ENCODE measurements at regions of chr6 and their contacts with region 1.

Region 1: DNA sequence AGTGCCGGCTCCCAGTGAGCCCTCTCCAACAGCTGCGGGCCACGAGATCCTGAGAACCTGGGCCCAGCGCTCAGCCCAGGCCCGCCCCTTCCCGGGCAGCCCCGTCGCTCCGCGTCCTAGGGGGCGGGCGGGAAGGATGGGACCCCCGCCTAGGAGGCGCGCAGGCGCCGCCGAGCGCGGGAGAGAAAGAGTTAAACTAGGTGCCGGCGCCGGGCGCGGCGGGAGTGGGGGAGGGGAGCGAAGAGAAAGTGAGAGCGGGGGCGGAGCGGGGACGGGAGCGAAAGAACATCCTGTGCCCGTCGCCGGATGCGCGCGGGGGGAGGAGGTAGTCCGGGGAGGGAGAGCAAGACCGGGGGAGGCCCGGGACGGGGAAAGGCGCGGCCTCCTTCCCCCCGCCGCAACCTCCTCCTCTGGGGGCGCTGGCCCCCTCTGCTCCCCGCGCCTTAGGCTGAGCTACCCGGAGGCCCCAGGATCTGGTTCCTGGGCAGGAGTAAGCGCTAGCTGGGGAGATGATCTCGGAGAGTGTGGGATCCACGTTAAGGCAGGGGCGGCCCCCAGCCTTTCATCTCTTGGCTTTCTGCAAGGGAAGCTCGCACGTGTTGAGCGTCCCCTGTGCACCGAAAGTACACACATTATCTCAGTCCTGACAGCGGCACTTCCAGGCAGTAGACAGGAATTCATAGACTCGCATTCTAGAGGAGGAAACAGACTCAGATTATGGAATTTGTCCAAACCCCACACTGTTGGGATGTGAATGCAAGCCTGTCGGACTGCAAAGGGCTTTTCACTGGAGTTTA is 4.9 kb upstream of the ARMC12 start:
- DNase-seq: peak; percentile 98
- ATAC-seq: peak; percentile 63
- H3K4me3 Mint-ChIP-seq: peak overlapping the region; percentile 85
- H3K27ac Mint-ChIP-seq: peak overlapping the region; percentile 99
- H3K4me1 Mint-ChIP-seq: peaks cover 77% of the 10 kb centered on the region
- H3K27me3 Mint-ChIP-seq: no peaks in the 10 kb centered on the region

Region 2: DNA sequence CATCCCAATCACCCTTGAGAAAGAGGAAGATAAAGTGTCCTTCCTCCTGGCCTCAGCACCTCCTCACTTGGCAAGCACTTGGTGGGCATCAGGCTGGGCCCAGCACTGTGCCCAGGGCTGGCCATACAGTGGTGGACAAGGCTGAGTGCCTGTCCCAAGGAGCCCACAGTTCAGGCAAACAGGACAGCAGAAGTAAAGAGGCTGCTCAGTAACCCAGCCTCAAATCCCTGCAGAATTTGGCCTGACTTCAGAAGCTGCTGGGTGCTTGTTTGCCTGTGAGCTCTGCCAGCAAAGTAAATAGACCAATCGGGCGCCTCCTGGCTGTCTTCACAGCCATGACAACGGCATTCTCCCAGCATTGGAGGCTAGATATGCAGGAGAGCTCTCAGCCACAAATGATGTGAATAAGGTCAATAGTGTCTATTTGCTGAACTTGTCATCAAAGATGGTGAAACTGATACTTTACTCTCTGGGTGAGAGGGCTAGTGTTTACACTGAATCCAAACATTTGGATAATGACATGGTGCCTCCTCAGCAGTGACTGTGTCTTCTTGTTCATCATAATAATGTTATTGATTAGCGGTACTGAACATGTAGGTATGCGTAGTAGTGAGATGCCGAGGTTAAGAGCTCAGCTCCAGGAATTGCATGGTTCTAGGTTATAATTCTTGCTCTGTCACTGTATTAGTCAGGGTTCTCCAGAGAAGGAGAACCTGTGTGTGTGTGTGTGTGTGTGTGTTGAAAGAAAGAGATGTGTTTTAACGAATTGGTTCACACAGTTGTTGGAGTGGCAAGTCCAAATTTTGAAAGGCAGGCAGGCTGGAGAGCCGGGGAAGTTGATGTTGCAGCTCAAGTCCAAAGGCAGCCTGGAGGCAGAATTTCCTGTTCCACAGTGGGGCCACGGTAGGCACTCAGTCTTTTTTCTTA is 316.6 kb before region 1 on chr6:
- CTCF ChIA-PET with region 1: no interaction called
- POLR2A ChIA-PET with region 1: no interaction called
- DNase-seq: peak; percentile 34
- ATAC-seq: no peak
- H3K4me3 Mint-ChIP-seq: no peak overlapping the region
- H3K27ac Mint-ChIP-seq: peak overlapping the region; percentile 78
- H3K4me1 Mint-ChIP-seq: peaks cover 84% of the 10 kb centered on the region
- H3K27me3 Mint-ChIP-seq: no peaks in the 10 kb centered on the region

Region 3: DNA sequence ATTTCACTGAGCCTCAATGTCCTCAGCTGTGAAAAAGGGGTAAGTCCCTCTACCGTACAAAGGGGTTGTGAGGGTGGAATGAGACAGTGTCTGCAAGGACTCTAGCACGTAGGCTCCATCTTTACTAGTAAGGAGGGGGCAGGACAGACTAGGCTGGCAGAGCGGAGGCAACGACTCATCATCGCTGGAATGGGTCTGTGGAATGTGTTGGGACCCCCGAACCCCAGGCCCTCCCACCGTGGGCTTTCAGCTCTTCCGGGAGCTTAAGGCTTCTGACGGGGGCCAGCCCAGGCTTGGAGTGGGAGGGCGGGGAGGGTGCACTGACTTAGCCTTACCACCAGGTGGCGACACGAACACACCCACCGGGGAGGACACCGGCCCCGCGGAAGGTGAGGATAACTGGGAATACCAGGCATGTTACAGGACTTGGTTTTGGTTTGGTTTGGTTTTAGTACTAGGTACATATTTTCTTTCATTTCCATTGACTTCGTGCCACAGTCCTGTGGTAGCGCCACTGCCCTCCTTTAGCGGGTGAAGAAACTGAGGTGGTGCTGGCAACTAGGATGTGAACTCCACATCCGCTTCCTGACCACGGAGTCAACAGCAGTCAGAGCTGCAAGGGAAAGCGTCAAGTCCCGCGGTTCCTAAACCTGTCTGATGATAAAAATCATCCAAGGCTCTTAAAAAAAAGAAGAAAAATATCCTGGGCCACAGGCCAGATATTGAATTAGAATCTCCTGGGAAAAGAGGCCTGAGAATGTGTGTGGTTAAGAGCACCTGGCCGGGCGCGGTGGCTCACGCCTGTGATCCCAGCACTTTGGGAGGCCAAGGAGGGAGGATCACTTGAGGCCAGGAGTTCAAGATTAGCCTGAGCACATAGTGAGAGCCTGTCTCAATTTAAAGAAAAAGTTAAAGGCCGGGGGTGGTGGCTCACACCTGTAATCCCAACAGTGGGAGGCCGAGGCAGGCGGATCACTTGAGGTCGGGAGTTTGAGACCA is 209.0 kb before region 1 on chr6:
- CTCF ChIA-PET with region 1: interaction called, 63 read pairs
- POLR2A ChIA-PET with region 1: interaction called, 3 read pairs
- DNase-seq: peak; percentile 83
- ATAC-seq: peak; percentile 95
- H3K4me3 Mint-ChIP-seq: peak overlapping the region; percentile 53
- H3K27ac Mint-ChIP-seq: peak overlapping the region; percentile 87
- H3K4me1 Mint-ChIP-seq: peaks cover 33% of the 10 kb centered on the region
- H3K27me3 Mint-ChIP-seq: peaks cover 6% of the 10 kb centered on the region

Region 4: DNA sequence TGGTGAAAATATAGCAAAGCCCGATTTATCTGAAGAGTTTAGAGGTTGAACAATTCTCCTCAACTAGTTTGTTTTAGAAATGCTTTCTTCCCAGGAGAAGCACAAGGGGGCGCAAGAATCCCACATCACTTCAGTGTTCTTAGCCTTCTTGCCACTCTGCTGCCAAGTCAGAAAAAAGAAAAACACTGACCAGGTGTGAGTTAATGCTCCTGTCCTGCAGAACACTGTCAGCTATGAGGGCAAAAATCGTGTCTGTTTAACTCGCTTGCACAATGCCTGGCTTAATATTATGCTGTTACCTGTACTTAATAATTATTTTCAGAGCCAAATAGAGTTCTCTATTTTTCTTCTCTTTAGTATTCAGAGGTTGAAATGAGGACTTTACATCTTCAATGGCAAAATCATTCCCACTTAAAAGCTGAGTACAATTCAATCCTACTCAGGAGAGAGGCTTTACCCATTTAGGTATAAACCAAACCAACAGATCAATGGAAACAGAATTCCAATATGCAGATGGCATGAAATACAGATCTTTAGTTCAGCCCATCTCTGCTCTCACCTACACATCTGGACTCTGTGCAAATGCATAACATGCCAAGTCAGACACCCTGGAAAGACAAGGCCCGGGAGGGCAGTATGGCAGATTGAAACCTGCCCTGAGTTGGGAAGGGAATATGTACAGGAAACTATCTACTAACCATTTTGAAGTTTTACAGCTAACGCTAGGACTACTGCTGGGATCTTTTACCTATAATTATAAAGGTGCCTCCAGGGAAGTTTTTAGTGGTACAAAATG is 147.8 kb before region 1 on chr6:
- CTCF ChIA-PET with region 1: interaction called, 259 read pairs
- POLR2A ChIA-PET with region 1: interaction called, 3 read pairs
- DNase-seq: peak; percentile 87
- ATAC-seq: peak; percentile 78
- H3K4me3 Mint-ChIP-seq: no peak overlapping the region
- H3K27ac Mint-ChIP-seq: no peak overlapping the region
- H3K4me1 Mint-ChIP-seq: peaks cover 18% of the 10 kb centered on the region
- H3K27me3 Mint-ChIP-seq: no peaks in the 10 kb centered on the region

Region 5: GRCh38 chr6:35624341-35625070 is 107.4 kb before region 1 on chr6:
- CTCF ChIA-PET with region 1: interaction called, 84 read pairs
- POLR2A ChIA-PET with region 1: interaction called, 3 read pairs
- DNase-seq: no peak
- ATAC-seq: peak; percentile 55
- H3K4me3 Mint-ChIP-seq: no peak overlapping the region
- H3K27ac Mint-ChIP-seq: peak overlapping the region; percentile 73
- H3K4me1 Mint-ChIP-seq: peaks cover 22% of the 10 kb centered on the region
- H3K27me3 Mint-ChIP-seq: no peaks in the 10 kb centered on the region

Region 6: GRCh38 chr6:35654883-35655282 is 77.1 kb before region 1 on chr6:
- CTCF ChIA-PET with region 1: interaction called, 14 read pairs
- POLR2A ChIA-PET with region 1: no interaction called
- DNase-seq: no peak
- ATAC-seq: no peak
- H3K4me3 Mint-ChIP-seq: no peak overlapping the region
- H3K27ac Mint-ChIP-seq: no peak overlapping the region
- H3K4me1 Mint-ChIP-seq: peaks cover 6% of the 10 kb centered on the region
- H3K27me3 Mint-ChIP-seq: no peaks in the 10 kb centered on the region

Region 7: DNA sequence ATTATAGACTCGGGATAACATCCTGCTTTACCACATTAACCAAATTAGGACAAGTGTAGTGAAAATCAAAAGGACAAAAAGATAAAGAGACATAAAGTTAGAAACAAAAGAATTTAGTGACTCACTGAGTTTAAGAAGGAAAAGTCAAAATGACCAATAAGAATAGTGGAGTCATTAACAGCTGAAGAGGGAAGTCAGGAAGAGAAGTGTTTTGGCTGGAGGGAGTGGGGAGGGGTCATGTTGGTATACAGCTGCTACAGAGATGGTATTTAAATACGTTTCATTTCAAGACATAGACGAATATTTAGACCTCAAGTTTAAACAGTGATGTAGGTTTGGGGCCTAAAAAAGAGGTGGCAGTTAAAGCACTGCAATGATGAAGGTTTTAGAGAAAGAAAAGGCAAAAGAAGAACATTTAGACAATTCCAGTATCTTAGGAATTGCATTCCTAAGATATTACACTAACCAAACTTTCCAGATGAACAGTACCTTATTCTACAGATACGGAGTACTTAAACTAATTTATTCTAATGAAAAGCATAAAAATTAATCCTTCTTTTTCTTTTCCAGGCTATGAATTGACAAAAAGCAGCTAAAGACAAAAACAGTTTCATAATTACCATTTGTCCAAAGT is 53.8 kb before region 1 on chr6:
- CTCF ChIA-PET with region 1: interaction called, 55 read pairs
- POLR2A ChIA-PET with region 1: interaction called, 4 read pairs
- DNase-seq: no peak
- ATAC-seq: no peak
- H3K4me3 Mint-ChIP-seq: no peak overlapping the region
- H3K27ac Mint-ChIP-seq: peak overlapping the region; percentile 54
- H3K4me1 Mint-ChIP-seq: peaks cover 66% of the 10 kb centered on the region
- H3K27me3 Mint-ChIP-seq: no peaks in the 10 kb centered on the region

Region 8: GRCh38 chr6:35719830-35720733 is 11.9 kb before region 1 on chr6:
- CTCF ChIA-PET with region 1: interaction called, 34 read pairs
- POLR2A ChIA-PET with region 1: interaction called, 17 read pairs
- DNase-seq: no peak
- ATAC-seq: peak; percentile 63
- H3K4me3 Mint-ChIP-seq: peak overlapping the region; percentile 47
- H3K27ac Mint-ChIP-seq: peak overlapping the region; percentile 85
- H3K4me1 Mint-ChIP-seq: peaks cover 42% of the 10 kb centered on the region
- H3K27me3 Mint-ChIP-seq: no peaks in the 10 kb centered on the region

Region 9: DNA sequence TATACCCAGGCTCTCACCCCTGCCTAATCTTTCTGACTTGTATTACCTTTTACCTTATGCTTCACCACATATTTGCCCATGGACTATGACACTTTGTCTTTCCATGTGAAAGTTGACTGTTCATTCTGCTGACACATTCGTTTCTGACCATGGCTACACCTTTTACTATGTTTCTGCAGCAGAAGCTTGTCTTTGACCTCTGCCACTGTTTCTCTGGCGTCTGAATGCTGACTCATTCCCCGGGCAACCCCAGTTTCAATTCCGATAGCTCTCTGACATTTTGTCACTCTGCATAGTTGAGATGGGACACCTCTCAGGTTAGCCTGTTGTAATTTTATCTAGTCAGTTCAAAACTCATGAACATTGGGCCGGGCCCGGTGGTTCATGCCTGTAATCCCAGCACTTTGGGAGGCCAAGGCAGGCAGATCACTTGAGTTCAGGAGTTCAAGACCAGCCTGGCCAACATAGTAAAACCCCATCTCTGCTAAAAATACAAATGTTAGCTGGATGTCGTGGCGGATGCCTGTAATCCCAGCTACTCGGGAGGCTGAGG is 241.8 kb after region 1 on chr6:
- CTCF ChIA-PET with region 1: no interaction called
- POLR2A ChIA-PET with region 1: no interaction called
- DNase-seq: no peak
- ATAC-seq: no peak
- H3K4me3 Mint-ChIP-seq: no peak overlapping the region
- H3K27ac Mint-ChIP-seq: no peak overlapping the region
- H3K4me1 Mint-ChIP-seq: peaks cover 2% of the 10 kb centered on the region
- H3K27me3 Mint-ChIP-seq: no peaks in the 10 kb centered on the region